ENCODE measurements at regions of chr20 and their contacts with region 1.

Region 1: DNA sequence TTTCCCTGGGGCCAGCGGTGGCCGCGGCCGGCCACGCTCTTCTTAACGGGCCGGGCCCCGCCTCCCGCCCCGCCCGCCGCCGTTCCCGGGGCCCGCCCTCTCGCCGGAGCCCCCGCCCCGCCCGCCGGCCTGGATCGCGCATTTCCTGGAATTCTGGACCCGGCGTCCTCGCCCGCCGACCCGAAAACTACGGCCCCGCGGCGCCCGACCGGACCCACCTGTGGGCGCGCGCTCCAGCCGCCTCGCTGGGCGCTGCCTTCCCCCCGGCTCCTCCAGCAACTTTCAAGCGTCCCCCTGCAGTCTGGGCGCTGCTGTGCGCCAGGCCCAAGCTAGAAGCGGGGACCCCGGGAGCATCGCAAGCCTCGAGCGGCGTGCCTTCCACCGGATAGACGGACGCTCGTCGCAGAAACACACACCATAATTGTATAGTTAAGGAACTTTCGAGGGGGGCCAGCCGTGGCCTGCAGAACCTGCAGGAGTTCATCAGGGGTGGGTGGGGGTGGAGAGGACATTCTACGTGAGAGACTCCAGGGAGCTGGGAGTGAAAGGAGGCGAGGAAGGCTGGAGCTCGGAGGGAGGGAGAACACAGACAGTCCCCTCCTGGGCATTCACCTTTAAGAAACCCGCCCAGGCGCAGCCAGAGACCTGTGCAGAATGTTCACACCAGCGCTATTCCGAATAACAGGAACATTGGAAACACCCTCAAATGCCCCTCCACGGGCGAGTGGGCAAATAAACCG is at the start of gene ADA:
- DNase-seq: peak; percentile 63
- H3K4me3 ChIP-seq: peak within 1 kb of the TSS; percentile 60 to 90 (median 76)
- H3K27ac ChIP-seq: peak within 1 kb of the TSS; percentile 56
- H3K4me1 ChIP-seq: peaks cover 9% of the 10 kb centered on the region
- H3K27me3 ChIP-seq: no peaks in the 10 kb centered on the region
- CTCF ChIP-seq: no peak
- total RNA-seq, gene ADA: 4.2 to 10.5 TPM

Region 2: DNA sequence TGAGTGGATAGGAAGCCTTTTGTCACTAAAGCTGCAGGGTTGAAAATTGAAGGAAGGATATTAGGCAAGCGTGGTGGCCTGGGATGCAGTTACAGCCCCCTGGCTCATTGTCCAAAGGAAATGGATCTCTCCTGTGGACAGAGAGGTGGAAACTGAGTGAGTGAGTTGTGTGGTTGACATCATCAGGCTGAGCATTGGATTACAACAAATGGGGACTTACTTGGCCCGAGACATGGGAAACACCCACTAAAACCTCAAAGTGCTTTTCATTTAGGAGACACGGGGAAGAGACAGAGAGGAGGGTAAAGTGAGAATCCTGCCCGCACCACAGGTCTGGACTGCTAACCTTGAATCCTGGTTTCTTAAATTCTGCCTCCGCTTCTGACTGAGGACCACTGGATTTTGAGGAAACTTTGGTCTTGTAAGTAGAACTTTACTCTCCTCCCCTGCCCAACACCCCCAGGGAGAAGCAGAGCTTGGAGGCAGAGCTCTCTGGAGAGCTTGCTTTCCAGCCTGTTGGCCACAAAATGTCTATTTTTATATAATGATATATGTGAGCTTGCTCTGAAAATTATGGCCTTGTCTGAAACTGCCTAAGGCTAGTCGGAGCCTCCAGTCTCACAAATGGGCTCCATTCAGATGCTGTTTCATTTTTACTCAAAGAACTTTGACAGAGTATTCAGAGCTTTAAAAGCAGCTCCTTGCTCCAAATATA is 69.4 kb before region 1 on chr20 and contains the start of gene PKIG:
- CTCF ChIA-PET with region 1: no interaction called
- dilution Hi-C with region 1: no loop called
- in situ Hi-C with region 1: no loop called
- intact Hi-C with region 1: no loop called
- DNase-seq: peak; percentile 45
- H3K4me3 ChIP-seq: no peak within 1 kb of the TSS
- H3K27ac ChIP-seq: no peak within 1 kb of the TSS
- H3K4me1 ChIP-seq: peaks cover 9% of the 10 kb centered on the region
- H3K27me3 ChIP-seq: no peaks in the 10 kb centered on the region
- CTCF ChIP-seq: no peak
- total RNA-seq, gene PKIG: 13.7 to 15.2 TPM

Region 3: DNA sequence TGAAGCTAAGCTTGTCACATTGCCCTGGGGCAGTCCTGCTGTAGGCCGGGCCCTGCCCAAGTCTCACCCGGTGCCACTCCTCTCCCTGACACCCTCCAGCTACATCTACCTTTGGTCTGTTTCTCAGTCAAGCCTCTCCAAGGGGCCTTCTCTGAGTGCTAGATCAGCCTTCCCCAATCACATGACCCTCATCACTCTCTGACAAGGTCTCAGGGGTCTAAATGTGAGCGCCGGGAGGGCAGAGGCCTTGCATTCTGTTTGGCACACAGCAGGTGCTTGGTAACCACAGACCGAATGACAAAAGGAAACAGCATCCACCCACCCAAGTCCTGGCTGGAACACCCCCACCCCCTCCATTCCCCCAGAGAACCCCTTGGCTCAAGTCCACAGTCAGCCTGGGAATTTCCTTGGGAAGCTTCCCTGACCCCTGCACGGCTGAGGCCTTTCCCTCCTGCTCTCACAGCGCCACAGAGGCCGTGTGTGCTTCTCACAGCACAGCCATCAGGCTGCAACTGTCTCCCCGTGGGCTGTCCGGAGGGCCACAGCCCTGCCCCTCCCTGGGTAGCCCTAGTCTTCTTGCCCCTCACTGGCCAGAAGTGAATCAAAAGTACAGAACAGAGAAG is 36.6 kb before region 1 on chr20:
- CTCF ChIA-PET with region 1: no interaction called
- dilution Hi-C with region 1: loop called (anchors 5 kb)
- in situ Hi-C with region 1: no loop called
- intact Hi-C with region 1: no loop called
- DNase-seq: no peak
- H3K4me3 ChIP-seq: no peak overlapping the region
- H3K27ac ChIP-seq: no peak overlapping the region
- H3K4me1 ChIP-seq: peaks cover 12% of the 10 kb centered on the region
- H3K27me3 ChIP-seq: no peaks in the 10 kb centered on the region
- CTCF ChIP-seq: no peak